ENCODE measurements at regions of chr4 and their contacts with region 1.

Region 1: DNA sequence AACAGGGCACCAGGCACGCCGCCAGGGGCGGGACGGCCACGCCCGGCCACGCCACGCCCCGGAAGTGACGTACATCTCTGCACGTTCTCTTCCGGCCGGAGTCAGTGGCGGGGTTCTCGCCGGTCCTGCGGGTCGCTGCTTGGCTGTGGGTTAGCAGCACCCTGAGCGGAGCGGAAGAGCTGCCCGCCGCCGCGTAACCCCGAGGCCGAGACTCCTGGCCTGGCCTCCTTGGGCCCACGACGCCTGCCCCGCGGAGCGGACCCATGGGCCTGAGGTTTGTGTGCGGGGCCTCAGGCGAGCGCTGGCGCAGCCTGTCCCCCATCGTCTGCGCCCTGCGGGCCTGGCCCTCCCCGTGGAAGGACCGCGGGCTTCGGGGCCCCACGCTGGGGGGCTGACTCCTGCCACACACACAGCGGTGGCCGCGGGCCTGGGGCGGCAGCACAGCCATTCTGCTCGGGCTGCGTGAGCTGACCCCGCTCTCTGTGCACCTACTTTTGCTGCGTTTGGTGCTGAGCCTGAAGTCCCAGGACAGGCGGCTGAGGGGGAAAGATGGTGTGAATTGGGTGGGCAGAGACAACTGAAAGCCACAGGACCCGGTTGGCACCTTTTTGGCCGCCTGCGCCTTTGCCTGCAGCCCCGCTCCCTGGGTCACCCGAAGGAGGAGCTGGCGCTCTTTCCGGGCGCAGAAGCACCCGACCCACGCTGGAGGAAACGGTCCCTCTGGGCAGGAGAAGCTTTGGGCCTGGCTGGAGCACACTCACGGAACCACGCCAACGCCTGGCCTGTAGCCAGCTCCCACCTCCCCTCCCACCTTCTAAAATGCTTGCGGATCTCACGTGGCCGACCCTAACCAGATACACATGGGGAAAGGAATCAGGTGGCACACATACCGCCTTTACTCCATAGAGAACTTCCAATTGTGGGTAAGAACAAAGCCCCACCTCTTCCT is 28.1 kb downstream of the NOP14 start:
- DNase-seq: peak; percentile 97
- ATAC-seq: peak; percentile 45
- H3K4me3 Mint-ChIP-seq: peak overlapping the region; percentile 87
- H3K27ac Mint-ChIP-seq: peak overlapping the region; percentile 90
- H3K4me1 Mint-ChIP-seq: peaks cover 49% of the 10 kb centered on the region
- H3K27me3 Mint-ChIP-seq: no peaks in the 10 kb centered on the region
- CTCF ChIP-seq: no peak

Region 2: GRCh38 chr4:2745981-2746806 is 188.9 kb before region 1 on chr4:
- CTCF ChIA-PET with region 1: interaction called, 3 read pairs
- POLR2A ChIA-PET with region 1: interaction called, 13 read pairs
- intact Hi-C with region 1: loop called (anchors 5 kb)
- DNase-seq: peak; percentile 99
- ATAC-seq: peak; percentile 99
- H3K4me3 Mint-ChIP-seq: peak overlapping the region; percentile 52
- H3K27ac Mint-ChIP-seq: peak overlapping the region; percentile 86
- H3K4me1 Mint-ChIP-seq: peaks cover 52% of the 10 kb centered on the region
- H3K27me3 Mint-ChIP-seq: no peaks in the 10 kb centered on the region
- CTCF ChIP-seq: no peak

Region 3: DNA sequence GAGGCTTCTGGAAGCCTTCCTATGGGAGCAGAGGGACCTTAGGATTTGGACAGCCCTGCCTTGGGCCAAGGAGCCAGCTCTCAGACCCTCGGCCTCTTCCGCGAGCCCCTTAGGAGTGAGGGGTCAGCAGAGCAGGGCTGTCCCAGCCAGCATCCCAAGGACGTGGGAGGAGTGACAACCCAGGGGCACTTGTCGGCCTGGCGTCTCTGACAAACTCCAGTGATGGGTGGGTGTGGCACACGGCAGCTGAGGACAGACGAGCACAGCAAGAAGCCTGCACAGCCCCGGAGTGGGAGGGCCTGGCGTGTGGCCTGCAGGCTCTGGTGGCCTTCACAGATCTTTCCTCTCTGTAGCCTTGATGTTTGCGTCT is 167.4 kb before region 1 on chr4:
- CTCF ChIA-PET with region 1: interaction called, 9 read pairs
- POLR2A ChIA-PET with region 1: interaction called, 15 read pairs
- intact Hi-C with region 1: loop called (anchors 5 kb)
- DNase-seq: no peak
- ATAC-seq: no peak
- H3K4me3 Mint-ChIP-seq: no peak overlapping the region
- H3K27ac Mint-ChIP-seq: no peak overlapping the region
- H3K4me1 Mint-ChIP-seq: peaks cover 28% of the 10 kb centered on the region
- H3K27me3 Mint-ChIP-seq: no peaks in the 10 kb centered on the region
- CTCF ChIP-seq: no peak

Region 4: GRCh38 chr4:2878346-2878745 is 56.7 kb before region 1 on chr4:
- CTCF ChIA-PET with region 1: no interaction called
- POLR2A ChIA-PET with region 1: no interaction called
- intact Hi-C with region 1: no loop called
- DNase-seq: peak; percentile 10
- ATAC-seq: peak; percentile 37
- H3K4me3 Mint-ChIP-seq: no peak overlapping the region
- H3K27ac Mint-ChIP-seq: peak overlapping the region; percentile 3
- H3K4me1 Mint-ChIP-seq: peaks cover 25% of the 10 kb centered on the region
- H3K27me3 Mint-ChIP-seq: no peaks in the 10 kb centered on the region
- CTCF ChIP-seq: no peak

Region 5: DNA sequence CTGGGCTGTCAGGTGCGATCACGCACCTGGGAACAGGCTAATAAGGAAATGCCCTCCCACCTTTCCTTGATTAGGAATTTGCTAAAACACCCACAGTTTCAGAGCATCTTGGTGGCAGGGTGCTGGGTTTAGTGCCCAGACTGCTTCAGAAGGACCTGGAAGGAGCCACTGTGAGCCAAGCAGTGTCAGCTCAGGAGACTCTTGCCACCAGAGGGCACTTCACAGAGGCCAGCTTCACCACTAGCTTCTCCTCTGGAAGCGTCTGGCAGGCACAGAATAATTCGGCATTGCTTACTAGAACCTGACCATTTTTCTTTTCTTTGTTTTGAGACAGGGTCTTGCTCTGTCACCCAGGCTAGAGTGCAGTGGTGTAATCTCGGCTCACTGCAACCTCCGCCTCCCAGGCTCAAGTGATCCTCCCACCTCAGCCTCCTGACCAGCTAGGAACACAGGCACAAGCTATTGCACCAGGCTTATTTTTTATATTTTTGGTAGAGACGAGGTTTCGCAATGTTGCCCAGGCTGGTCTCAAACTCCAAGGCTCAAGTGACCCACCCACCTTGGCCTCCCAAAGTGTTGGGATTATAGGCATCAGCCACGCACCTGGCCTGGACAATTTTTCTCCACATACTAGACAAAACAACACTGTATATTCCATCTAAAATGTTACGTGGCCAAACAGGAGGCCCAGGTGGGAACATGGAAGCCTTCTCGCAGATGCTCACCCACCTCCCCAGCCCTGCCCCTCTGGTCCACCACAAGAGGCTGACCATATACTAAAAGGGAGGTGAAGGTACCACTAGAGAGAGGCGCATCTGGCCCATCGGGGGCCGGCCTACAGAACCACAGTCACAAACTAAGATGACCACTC is 14.0 kb after region 1 on chr4:
- CTCF ChIA-PET with region 1: interaction called, 59 read pairs
- POLR2A ChIA-PET with region 1: interaction called, 121 read pairs
- intact Hi-C with region 1: no loop called
- DNase-seq: peak; percentile 28
- ATAC-seq: peak; percentile 64
- H3K4me3 Mint-ChIP-seq: no peak overlapping the region
- H3K27ac Mint-ChIP-seq: peak overlapping the region; percentile 32
- H3K4me1 Mint-ChIP-seq: peaks cover 31% of the 10 kb centered on the region
- H3K27me3 Mint-ChIP-seq: no peaks in the 10 kb centered on the region
- CTCF ChIP-seq: no peak

Region 6: GRCh38 chr4:2963175-2963965 is 28.3 kb after region 1 on chr4 and contains the starts of genes GRK4 and NOP14:
- CTCF ChIA-PET with region 1: interaction called, 4 read pairs
- POLR2A ChIA-PET with region 1: interaction called, 30 read pairs
- intact Hi-C with region 1: loop called (anchors 2 kb)
- DNase-seq: peak; percentile 99
- ATAC-seq: peak; percentile 89
- H3K4me3 Mint-ChIP-seq: peak within 1 kb of the TSS; percentile 83
- H3K27ac Mint-ChIP-seq: peak within 1 kb of the TSS; percentile 94
- H3K4me1 Mint-ChIP-seq: peaks cover 32% of the 10 kb centered on the region
- H3K27me3 Mint-ChIP-seq: no peaks in the 10 kb centered on the region
- CTCF ChIP-seq: no peak
- total RNA-seq, gene GRK4: 2.8 to 3.0 TPM
- total RNA-seq, gene NOP14: 76.8 to 77.3 TPM